ENCODE measurements at regions of chr15 and their contacts with region 1.

Region 1: DNA sequence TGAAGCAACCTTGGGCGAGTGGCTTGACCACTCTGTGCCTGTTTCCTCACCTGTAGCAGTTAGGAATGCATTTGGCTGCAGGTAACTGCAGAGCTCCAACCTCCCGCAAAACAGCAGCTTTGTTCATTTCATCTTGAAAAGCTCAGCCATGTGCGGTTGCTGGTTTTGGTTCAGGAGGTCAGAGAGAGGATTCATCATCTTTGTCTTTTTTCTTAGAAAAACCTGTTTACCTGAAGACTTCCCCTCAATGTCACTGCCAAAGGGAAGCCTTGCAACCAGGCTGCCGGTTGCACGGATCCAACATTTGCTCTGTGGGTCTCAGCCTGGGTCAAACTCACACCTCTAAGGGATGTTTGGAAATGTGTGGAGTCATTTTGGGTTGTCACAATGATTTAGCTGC is 16.4 kb upstream of the FURIN start:
- DNase-seq: no peak
- ATAC-seq: no peak
- H3K4me3 ChIP-seq: no peak overlapping the region
- H3K4me3 Mint-ChIP-seq: peak overlapping the region in 7 of 10 donors; percentile 18 to 87 (median 52)
- H3K27ac ChIP-seq: no peak overlapping the region
- H3K27ac Mint-ChIP-seq: peak overlapping the region in 5 of 9 donors; percentile 27 to 92 (median 54)
- H3K4me1 ChIP-seq: peaks cover 19 to 21% of the 10 kb centered on the region in 2 donors
- H3K4me1 Mint-ChIP-seq: peaks cover 24 to 78% (median 38%) of the 10 kb centered on the region in 7 donors
- H3K27me3 ChIP-seq: no peaks in the 10 kb centered on the region
- H3K27me3 Mint-ChIP-seq: peaks cover 0 to 6% (median 0%) of the 10 kb centered on the region in 5 donors

Region 2: GRCh38 chr15:90829942-90830440 is 21.9 kb before region 1 on chr15:
- CTCF ChIA-PET with region 1: no interaction called
- POLR2A ChIA-PET with region 1: no interaction called
- intact Hi-C with region 1: loop called in 1 of 2 experiments (anchors 1 kb)
- DNase-seq: peak in 4 of 9 donors; percentile 24 to 74 (median 44)
- ATAC-seq: peak; percentile 80
- H3K4me3 ChIP-seq: no peak overlapping the region
- H3K4me3 Mint-ChIP-seq: peak overlapping the region; percentile 26 to 83 (median 60)
- H3K27ac ChIP-seq: no peak overlapping the region
- H3K27ac Mint-ChIP-seq: peak overlapping the region; percentile 0 to 98 (median 79)
- H3K4me1 ChIP-seq: peaks cover 0 to 5% of the 10 kb centered on the region in 2 donors
- H3K4me1 Mint-ChIP-seq: peaks cover 12 to 70% (median 19%) of the 10 kb centered on the region in 7 donors
- H3K27me3 ChIP-seq: no peaks in the 10 kb centered on the region
- H3K27me3 Mint-ChIP-seq: no peaks in the 10 kb centered on the region

Region 3: DNA sequence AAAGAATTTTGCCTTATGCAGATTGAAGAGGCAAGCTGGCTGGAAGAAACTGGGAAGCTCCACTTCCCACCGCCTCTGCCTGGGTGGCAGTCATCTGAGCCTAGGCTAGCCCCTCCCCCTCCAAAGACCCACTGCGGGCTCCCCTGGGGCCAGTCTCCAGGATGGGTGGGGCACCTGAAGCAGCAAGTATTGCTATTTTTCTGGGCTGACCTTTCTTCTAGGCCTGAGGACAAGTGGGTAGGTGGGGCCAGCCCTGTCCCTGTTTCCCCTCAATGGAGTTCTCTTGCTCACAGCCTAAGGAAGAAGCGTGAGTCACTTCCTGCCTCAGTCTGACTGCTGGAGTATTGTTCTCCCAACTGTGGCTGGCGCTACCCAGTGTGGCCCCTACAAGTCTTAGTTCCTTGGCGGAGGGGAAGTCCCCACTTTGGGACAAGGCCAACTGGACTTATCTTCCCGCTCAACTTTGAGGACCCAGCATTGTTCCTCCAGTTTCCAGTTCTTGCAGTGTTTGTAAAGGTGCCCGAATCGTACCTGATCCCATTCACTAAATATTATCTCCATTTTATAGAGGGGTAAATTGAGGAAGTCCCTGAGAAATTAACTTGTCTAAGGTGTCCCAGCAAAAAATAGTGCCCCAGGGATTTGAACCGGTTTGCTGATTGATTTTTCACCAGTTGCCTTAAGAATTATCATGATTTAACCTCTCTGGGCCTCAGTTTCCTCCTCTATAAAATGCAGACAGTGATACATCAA is 17.8 kb after region 1 on chr15:
- CTCF ChIA-PET with region 1: no interaction called
- POLR2A ChIA-PET with region 1: interaction called, 3 read pairs
- intact Hi-C with region 1: loop called (anchors 1 to 2 kb)
- DNase-seq: peak in 1 of 9 donors; percentile 67
- ATAC-seq: peak; percentile 73
- H3K4me3 ChIP-seq: peak overlapping the region; percentile 53
- H3K4me3 Mint-ChIP-seq: peak overlapping the region; percentile 82 to 93 (median 90)
- H3K27ac ChIP-seq: peak overlapping the region; percentile 73
- H3K27ac Mint-ChIP-seq: peak overlapping the region; percentile 82 to 97 (median 92)
- H3K4me1 ChIP-seq: peaks cover 27% of the 10 kb centered on the region in 2 donors
- H3K4me1 Mint-ChIP-seq: peaks cover 22 to 66% (median 45%) of the 10 kb centered on the region in 7 donors
- H3K27me3 ChIP-seq: no peaks in the 10 kb centered on the region
- H3K27me3 Mint-ChIP-seq: no peaks in the 10 kb centered on the region